ENCODE measurements at regions of chr18 and their contacts with region 1.

Region 1: DNA sequence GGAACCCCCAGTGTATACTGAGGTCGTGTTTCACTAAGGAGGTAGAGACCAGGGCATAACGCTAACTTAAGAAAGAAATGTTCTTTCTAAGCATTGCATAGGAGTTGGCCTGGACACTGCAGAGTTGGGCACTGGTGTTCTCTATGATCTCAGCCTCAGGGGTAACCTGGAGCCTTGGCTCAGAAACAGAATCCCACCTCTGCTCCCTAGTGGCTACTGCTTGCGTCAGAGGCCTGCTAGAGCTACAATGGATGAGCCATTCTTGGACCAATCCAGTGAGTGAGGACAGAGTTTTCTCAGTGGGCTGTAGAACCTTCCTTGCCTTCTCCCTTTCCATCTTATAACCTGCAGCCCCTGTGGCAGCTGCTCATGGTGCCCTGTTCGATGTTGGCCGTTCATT is 324.4 kb upstream of the CELF4 start:
- DNase-seq: no peak
- ATAC-seq: no peak
- H3K4me3 ChIP-seq: no peak overlapping the region
- H3K27ac ChIP-seq: no peak overlapping the region
- H3K4me1 ChIP-seq: no peaks in the 10 kb centered on the region
- H3K27me3 ChIP-seq: no peaks in the 10 kb centered on the region
- CTCF ChIP-seq: no peak
- POLR2A ChIP-seq: no peak

Region 2: GRCh38 chr18:37659906-37660305 is 230.1 kb before region 1 on chr18:
- intact Hi-C with region 1: loop called in 1 of 2 experiments (anchors 5 kb)
- DNase-seq: no peak
- ATAC-seq: peak in 1 of 4 donors; percentile 18
- H3K4me3 ChIP-seq: no peak overlapping the region
- H3K27ac ChIP-seq: no peak overlapping the region
- H3K4me1 ChIP-seq: no peaks in the 10 kb centered on the region
- H3K27me3 ChIP-seq: no peaks in the 10 kb centered on the region
- CTCF ChIP-seq: no peak
- POLR2A ChIP-seq: no peak